ENCODE measurements at regions of chr2 and their contacts with region 1.

Region 1: GRCh38 chr2:99559075-99559662 is 69.4 kb upstream of the REV1 start:
- DNase-seq: peak; percentile 69
- ATAC-seq: peak; percentile 98
- H3K4me3 Mint-ChIP-seq: no peak overlapping the region
- H3K27ac Mint-ChIP-seq: no peak overlapping the region
- H3K4me1 Mint-ChIP-seq: peaks cover 7% of the 10 kb centered on the region
- H3K27me3 Mint-ChIP-seq: no peaks in the 10 kb centered on the region
- CTCF ChIP-seq: peak; percentile 94

Region 2: DNA sequence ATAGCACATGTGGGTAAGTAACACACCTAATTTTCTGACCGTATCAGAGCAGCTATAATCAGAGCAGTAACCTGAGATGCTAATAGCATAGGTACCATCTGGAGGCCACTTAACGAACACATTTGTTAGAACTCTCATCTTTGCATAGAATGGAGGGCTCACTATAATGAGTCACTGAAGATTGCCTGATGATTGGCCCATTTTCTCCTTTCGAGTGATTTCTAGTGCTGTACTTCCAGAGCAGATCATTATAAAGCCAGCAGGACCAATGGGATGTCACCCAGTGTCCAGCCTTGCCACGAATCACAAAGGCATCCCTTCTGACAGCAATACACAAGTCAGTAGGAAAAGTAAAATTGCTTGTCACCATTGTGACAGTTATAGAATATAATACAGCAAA is 12.4 kb after region 1 on chr2:
- CTCF ChIA-PET with region 1: interaction called, 11 read pairs
- POLR2A ChIA-PET with region 1: no interaction called
- intact Hi-C with region 1: no loop called
- DNase-seq: no peak
- ATAC-seq: no peak
- H3K4me3 Mint-ChIP-seq: no peak overlapping the region
- H3K27ac Mint-ChIP-seq: no peak overlapping the region
- H3K4me1 Mint-ChIP-seq: no peaks in the 10 kb centered on the region
- H3K27me3 Mint-ChIP-seq: no peaks in the 10 kb centered on the region
- CTCF ChIP-seq: no peak

Region 3: DNA sequence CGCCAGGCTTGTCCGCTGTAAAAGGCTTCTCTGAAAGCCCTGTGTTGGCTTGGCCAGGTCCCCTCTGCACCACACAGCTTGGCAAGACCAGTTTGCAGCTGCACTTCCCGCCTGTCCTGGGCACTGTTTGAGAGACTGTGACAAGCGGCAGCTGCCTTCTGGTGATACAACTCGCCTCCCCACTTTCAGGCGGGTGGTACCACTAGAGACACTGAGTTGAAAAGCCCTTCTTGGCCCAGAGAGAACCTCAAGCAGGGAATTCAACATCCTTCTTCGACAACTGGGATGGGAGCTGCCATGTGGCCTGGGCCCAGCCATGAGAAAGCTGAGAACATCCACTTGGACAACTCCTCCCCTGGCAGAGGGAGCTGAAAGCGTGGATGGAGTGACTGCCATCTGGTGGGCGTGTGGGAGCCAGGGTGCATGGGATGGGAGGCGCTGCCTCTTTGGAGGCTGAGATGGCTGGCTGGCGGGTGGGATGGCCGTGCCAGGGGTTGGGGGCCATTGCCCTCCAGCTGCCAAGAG is 56.1 kb after region 1 on chr2:
- CTCF ChIA-PET with region 1: no interaction called
- POLR2A ChIA-PET with region 1: no interaction called
- intact Hi-C with region 1: no loop called
- DNase-seq: no peak
- ATAC-seq: no peak
- H3K4me3 Mint-ChIP-seq: no peak overlapping the region
- H3K27ac Mint-ChIP-seq: no peak overlapping the region
- H3K4me1 Mint-ChIP-seq: peaks cover 27% of the 10 kb centered on the region
- H3K27me3 Mint-ChIP-seq: no peaks in the 10 kb centered on the region
- CTCF ChIP-seq: no peak

Region 4: DNA sequence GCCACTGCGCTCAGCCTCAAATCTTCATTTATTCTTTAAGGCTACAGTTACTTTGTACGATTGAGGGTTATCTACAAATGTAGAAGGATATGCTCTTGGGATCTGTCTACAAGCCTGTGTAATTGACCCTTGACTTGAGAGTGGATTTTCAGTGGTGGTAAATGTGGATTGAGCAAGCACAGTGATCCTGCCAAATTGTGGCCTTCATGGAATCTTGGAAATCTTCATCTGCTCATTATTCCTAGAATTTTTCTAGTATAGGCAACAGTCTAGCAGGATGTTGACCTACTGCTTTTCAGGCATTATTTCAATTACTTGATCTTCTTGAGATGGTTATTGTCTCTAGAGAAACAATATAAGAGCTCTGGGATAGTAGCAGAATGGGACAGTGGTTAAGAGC is 156.8 kb after region 1 on chr2:
- CTCF ChIA-PET with region 1: no interaction called
- POLR2A ChIA-PET with region 1: no interaction called
- intact Hi-C with region 1: no loop called
- DNase-seq: no peak
- ATAC-seq: no peak
- H3K4me3 Mint-ChIP-seq: no peak overlapping the region
- H3K27ac Mint-ChIP-seq: no peak overlapping the region
- H3K4me1 Mint-ChIP-seq: no peaks in the 10 kb centered on the region
- H3K27me3 Mint-ChIP-seq: no peaks in the 10 kb centered on the region
- CTCF ChIP-seq: no peak

Region 5: DNA sequence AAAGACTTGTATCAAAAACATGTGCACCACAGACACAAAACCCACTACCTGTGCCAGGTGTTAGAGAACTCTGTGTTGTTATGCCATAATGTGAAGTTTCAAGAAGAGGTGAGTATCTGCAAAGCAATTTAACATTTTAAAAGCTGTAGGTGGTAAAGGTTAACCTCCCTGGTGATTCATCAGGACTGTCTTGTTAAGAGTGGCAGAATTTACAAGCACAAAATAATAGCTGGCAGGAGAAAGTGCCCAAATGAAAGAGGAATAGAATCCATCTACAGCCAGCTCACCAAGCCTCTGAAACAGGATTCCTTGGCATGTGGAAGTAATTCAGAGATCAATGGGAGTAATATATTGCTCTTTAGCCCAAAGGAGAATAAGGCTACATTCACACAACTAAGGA is 352.6 kb after region 1 on chr2:
- CTCF ChIA-PET with region 1: no interaction called
- POLR2A ChIA-PET with region 1: no interaction called
- intact Hi-C with region 1: no loop called
- DNase-seq: no peak
- ATAC-seq: no peak
- H3K4me3 Mint-ChIP-seq: no peak overlapping the region
- H3K27ac Mint-ChIP-seq: no peak overlapping the region
- H3K4me1 Mint-ChIP-seq: peaks cover 12% of the 10 kb centered on the region
- H3K27me3 Mint-ChIP-seq: no peaks in the 10 kb centered on the region
- CTCF ChIP-seq: no peak

Region 6: DNA sequence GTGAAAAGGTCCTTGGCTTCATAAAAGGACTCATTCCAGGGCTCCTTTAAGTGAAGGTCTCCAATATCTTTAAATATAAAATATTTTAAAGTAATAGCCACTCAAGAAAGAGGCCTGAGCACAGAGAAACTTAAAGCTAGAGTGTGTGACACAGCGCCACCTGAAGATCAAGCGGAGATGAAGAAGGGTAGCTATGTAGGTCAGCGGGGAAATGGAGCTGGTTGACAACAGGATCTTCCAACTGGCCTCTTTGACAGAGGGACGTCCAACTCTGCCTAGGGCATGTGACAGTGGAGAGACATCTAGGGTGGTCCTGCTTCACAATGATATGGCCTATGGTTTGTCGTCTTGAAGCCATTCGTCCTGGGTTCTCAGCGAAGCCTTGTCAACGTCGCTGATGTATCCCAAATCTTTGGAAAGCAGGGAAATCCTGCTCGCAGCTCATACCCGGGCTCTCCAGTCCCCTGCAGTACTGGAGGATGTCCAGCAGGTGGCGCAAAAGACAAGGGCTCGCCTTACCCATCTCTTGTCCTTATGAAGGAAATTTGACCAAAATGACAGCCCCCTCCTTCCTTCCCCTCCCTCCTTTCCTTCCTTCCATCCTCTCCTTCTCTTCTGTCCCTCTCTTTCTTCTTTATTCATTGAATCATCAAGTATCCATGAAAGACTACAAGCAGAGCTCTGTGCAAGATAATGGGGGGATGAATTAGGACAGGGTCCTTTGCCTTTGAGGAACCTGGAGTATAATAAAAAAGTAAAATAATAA is 703.6 kb after region 1 on chr2:
- CTCF ChIA-PET with region 1: interaction called, 69 read pairs
- POLR2A ChIA-PET with region 1: no interaction called
- intact Hi-C with region 1: loop called (anchors 1 kb)
- DNase-seq: peak; percentile 51
- ATAC-seq: peak; percentile 76
- H3K4me3 Mint-ChIP-seq: no peak overlapping the region
- H3K27ac Mint-ChIP-seq: no peak overlapping the region
- H3K4me1 Mint-ChIP-seq: peaks cover 8% of the 10 kb centered on the region
- H3K27me3 Mint-ChIP-seq: no peaks in the 10 kb centered on the region
- CTCF ChIP-seq: peak; percentile 92

Region 7: GRCh38 chr2:100381240-100381639 is 822.1 kb after region 1 on chr2:
- CTCF ChIA-PET with region 1: interaction called, 10 read pairs
- POLR2A ChIA-PET with region 1: interaction called, 3 read pairs
- intact Hi-C with region 1: loop called (anchors 1 kb)
- DNase-seq: peak; percentile 71
- ATAC-seq: peak; percentile 97
- H3K4me3 Mint-ChIP-seq: no peak overlapping the region
- H3K27ac Mint-ChIP-seq: peak overlapping the region; percentile 31
- H3K4me1 Mint-ChIP-seq: peaks cover 8% of the 10 kb centered on the region
- H3K27me3 Mint-ChIP-seq: no peaks in the 10 kb centered on the region
- CTCF ChIP-seq: no peak

Region 8: GRCh38 chr2:100427628-100428258 is 868.6 kb after region 1 on chr2:
- CTCF ChIA-PET with region 1: no interaction called
- POLR2A ChIA-PET with region 1: no interaction called
- intact Hi-C with region 1: loop called (anchors 2 kb)
- DNase-seq: peak; percentile 43
- ATAC-seq: peak; percentile 68
- H3K4me3 Mint-ChIP-seq: no peak overlapping the region
- H3K27ac Mint-ChIP-seq: no peak overlapping the region
- H3K4me1 Mint-ChIP-seq: peaks cover 3% of the 10 kb centered on the region
- H3K27me3 Mint-ChIP-seq: peaks cover 10% of the 10 kb centered on the region
- CTCF ChIP-seq: no peak

Region 9: GRCh38 chr2:100610381-100610831 is 1051.2 kb after region 1 on chr2:
- CTCF ChIA-PET with region 1: no interaction called
- POLR2A ChIA-PET with region 1: no interaction called
- intact Hi-C with region 1: loop called (anchors 2 kb)
- DNase-seq: peak; percentile 25
- ATAC-seq: peak; percentile 58
- H3K4me3 Mint-ChIP-seq: no peak overlapping the region
- H3K27ac Mint-ChIP-seq: no peak overlapping the region
- H3K4me1 Mint-ChIP-seq: peaks cover 2% of the 10 kb centered on the region
- H3K27me3 Mint-ChIP-seq: peaks cover 24% of the 10 kb centered on the region
- CTCF ChIP-seq: no peak

Region 10: GRCh38 chr2:100992262-100992661 is 1433.1 kb after region 1 on chr2:
- CTCF ChIA-PET with region 1: no interaction called
- POLR2A ChIA-PET with region 1: no interaction called
- intact Hi-C with region 1: loop called (anchors 5 kb)
- DNase-seq: no peak
- ATAC-seq: no peak
- H3K4me3 Mint-ChIP-seq: no peak overlapping the region
- H3K27ac Mint-ChIP-seq: no peak overlapping the region
- H3K4me1 Mint-ChIP-seq: peaks cover 5% of the 10 kb centered on the region
- H3K27me3 Mint-ChIP-seq: no peaks in the 10 kb centered on the region
- CTCF ChIP-seq: no peak